ENCODE measurements at regions of chr12 and their contacts with region 1.

Region 1: DNA sequence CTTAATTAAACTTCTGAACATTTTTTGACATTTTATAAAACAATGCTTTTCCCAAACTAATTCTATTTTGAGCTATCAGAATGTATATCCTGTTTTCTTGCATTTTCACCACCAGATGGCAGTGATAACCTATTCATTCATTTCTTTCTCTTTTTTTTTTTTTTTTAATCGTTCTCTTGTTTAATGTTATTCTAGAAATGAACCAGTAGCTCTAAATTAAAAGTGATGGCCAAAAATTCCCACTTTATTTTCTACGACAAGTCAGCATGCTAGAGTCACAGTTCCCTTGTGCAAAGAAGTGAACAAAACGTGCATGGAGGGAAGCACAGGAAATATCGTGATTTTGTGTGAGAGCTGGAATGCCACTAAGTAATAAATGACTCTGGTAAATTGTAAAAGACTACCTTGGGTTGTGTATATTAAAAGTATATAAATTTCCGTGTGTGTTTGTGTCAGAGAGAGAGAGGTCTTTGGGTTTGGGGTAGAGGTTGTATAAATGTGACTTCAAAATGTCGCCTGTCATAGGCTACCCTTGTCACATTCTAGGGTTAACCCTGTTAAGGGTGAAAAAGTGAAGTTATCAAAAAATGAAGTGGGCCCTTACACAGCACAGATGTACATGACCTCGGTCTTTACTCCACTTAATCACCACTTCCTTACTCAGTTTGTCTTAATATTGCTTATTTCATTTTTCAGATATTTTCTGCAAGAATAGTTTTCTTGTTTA is 40.4 kb upstream of the LDHB start:
- DNase-seq: no peak
- H3K4me3 Mint-ChIP-seq: no peak overlapping the region
- H3K27ac Mint-ChIP-seq: no peak overlapping the region
- H3K4me1 Mint-ChIP-seq: peaks cover 12% of the 10 kb centered on the region
- H3K27me3 Mint-ChIP-seq: no peaks in the 10 kb centered on the region

Region 2: DNA sequence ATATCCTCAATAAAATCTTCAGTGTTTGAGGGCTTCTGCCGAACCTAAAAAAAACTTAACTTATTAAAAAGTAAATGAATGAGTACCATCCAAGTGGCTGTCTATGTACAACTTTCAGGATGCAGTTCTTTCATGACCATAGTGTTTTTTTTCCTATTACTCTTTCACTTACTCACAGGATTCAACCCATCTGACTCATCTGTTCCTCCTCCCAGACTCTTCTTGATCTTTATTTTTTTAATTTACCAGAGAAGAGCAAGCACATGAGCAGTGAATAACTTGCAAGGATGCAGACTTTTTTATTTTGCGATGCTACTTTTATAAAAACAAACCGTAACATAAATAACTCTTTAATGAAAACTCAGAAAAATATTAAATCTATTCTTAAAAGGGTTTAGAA is 221.1 kb before region 1 on chr12:
- CTCF ChIA-PET with region 1: no interaction called
- POLR2A ChIA-PET with region 1: no interaction called
- intact Hi-C with region 1: no loop called
- DNase-seq: no peak
- H3K4me3 Mint-ChIP-seq: no peak overlapping the region
- H3K27ac Mint-ChIP-seq: peak overlapping the region; percentile 73
- H3K4me1 Mint-ChIP-seq: peaks cover 14% of the 10 kb centered on the region
- H3K27me3 Mint-ChIP-seq: no peaks in the 10 kb centered on the region

Region 3: GRCh38 chr12:21773263-21773741 is 75.2 kb after region 1 on chr12:
- CTCF ChIA-PET with region 1: interaction called, 6 read pairs
- POLR2A ChIA-PET with region 1: no interaction called
- intact Hi-C with region 1: loop called (anchors 5 kb)
- DNase-seq: peak; percentile 34
- H3K4me3 Mint-ChIP-seq: no peak overlapping the region
- H3K27ac Mint-ChIP-seq: no peak overlapping the region
- H3K4me1 Mint-ChIP-seq: peaks cover 10% of the 10 kb centered on the region
- H3K27me3 Mint-ChIP-seq: peaks cover 37% of the 10 kb centered on the region

Region 4: GRCh38 chr12:21912318-21912717 is 214.3 kb after region 1 on chr12:
- CTCF ChIA-PET with region 1: no interaction called
- POLR2A ChIA-PET with region 1: no interaction called
- intact Hi-C with region 1: no loop called
- DNase-seq: no peak
- H3K4me3 Mint-ChIP-seq: no peak overlapping the region
- H3K27ac Mint-ChIP-seq: no peak overlapping the region
- H3K4me1 Mint-ChIP-seq: no peaks in the 10 kb centered on the region
- H3K27me3 Mint-ChIP-seq: peaks cover 3% of the 10 kb centered on the region

Region 5: DNA sequence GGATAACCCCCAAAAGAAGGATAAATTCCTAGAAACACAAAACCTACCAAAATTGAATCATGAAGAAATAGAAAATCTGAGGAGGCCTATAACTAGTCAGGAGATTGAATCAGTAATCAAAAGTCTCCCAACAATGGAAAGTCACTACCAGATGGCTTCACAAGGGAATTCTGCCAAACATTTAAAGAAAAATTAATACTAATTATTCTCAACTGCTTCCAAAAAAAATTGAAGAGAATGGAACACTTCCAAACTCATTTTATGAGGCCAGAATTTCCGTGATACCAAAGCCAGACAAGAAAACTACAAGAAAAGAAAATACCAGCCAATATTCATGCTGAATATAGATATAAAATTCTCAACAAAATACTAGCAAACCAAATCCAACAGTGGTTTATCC is 251.0 kb after region 1 on chr12:
- CTCF ChIA-PET with region 1: no interaction called
- POLR2A ChIA-PET with region 1: no interaction called
- intact Hi-C with region 1: no loop called
- DNase-seq: no peak
- H3K4me3 Mint-ChIP-seq: no peak overlapping the region
- H3K27ac Mint-ChIP-seq: no peak overlapping the region
- H3K4me1 Mint-ChIP-seq: no peaks in the 10 kb centered on the region
- H3K27me3 Mint-ChIP-seq: peaks cover 5% of the 10 kb centered on the region

Region 6: DNA sequence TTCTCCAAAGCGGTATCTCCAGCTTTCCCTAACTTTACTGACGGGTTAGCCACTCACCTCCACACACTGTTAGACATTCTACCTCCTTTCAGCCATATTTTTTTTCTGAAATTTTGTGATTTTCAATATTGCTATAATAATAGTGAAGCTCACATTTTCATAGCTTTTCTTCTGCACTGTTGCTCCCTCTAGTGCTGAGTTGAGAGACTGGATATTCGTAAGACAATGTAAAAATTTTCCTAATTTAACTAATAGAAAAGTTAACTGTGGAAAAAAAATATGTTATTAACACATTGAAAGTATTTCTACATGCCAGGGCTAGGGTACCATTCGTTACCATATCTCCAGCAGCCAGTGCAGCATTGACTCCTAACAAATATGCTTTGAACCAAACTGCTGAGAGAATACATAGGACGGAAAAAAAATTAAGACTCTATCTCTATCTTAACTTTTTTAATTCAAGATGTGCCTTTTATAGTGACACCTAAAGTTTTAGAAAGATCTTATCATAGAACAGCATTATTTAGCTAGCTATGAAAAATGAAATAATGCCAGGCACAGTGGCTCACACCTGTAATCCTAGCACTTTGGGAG is 291.8 kb after region 1 on chr12:
- CTCF ChIA-PET with region 1: interaction called, 21 read pairs
- POLR2A ChIA-PET with region 1: no interaction called
- intact Hi-C with region 1: loop called (anchors 2 kb)
- DNase-seq: no peak
- H3K4me3 Mint-ChIP-seq: no peak overlapping the region
- H3K27ac Mint-ChIP-seq: no peak overlapping the region
- H3K4me1 Mint-ChIP-seq: peaks cover 8% of the 10 kb centered on the region
- H3K27me3 Mint-ChIP-seq: peaks cover 4% of the 10 kb centered on the region

Region 7: GRCh38 chr12:22018860-22019259 is 320.8 kb after region 1 on chr12:
- CTCF ChIA-PET with region 1: interaction called, 56 read pairs
- POLR2A ChIA-PET with region 1: no interaction called
- intact Hi-C with region 1: loop called (anchors 1 kb)
- DNase-seq: no peak
- H3K4me3 Mint-ChIP-seq: no peak overlapping the region
- H3K27ac Mint-ChIP-seq: no peak overlapping the region
- H3K4me1 Mint-ChIP-seq: no peaks in the 10 kb centered on the region
- H3K27me3 Mint-ChIP-seq: peaks cover under 1% of the 10 kb centered on the region

Region 8: GRCh38 chr12:22443379-22444316 is 745.6 kb after region 1 on chr12:
- CTCF ChIA-PET with region 1: interaction called, 14 read pairs
- POLR2A ChIA-PET with region 1: no interaction called
- intact Hi-C with region 1: loop called (anchors 5 kb)
- DNase-seq: peak; percentile 67
- H3K4me3 Mint-ChIP-seq: no peak overlapping the region
- H3K27ac Mint-ChIP-seq: no peak overlapping the region
- H3K4me1 Mint-ChIP-seq: peaks cover 4% of the 10 kb centered on the region
- H3K27me3 Mint-ChIP-seq: no peaks in the 10 kb centered on the region

Region 9: DNA sequence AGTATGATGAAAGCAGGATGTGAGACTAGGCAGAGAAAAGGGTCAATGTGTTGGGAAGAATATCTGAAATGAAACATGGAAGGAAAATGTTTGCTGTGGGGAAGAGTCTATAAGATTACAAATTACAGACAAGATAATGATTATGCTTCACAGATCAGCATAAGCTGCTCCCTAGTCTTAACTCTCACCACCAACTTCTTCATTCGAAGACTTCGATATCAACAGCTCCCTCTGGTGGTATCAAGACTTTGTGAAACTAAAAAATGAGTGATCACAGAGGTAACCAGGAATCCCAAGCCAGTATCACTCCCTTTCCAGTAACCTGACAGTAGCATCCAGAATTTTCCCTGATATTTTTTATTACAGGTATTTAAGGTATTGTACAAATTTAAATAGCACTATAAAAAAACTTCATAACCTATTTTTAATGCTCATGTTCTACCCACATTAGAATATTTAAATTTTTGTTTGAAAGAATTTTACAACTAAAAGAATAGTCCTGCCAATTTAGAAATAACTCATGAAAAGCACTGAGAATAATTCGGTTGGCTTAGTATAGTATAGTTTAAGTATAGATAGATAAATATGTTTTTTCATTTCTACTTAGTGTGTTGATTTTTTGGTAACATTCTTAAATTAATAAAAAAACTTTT is 761.9 kb after region 1 on chr12:
- CTCF ChIA-PET with region 1: interaction called, 12 read pairs
- POLR2A ChIA-PET with region 1: no interaction called
- intact Hi-C with region 1: loop called (anchors 5 kb)
- DNase-seq: no peak
- H3K4me3 Mint-ChIP-seq: no peak overlapping the region
- H3K27ac Mint-ChIP-seq: no peak overlapping the region
- H3K4me1 Mint-ChIP-seq: peaks cover 4% of the 10 kb centered on the region
- H3K27me3 Mint-ChIP-seq: no peaks in the 10 kb centered on the region